Activated T-helper 1 cell treated with anti-CD3 and anti-CD28 coated beads, Interleukin-12 subunit alpha, Interleukin-12 subunit beta, Interleukin-2, Interleukin-4 antibody, amounts not matched to agents 30 ng/mL and 10 ng/mL and 1 ng/mL, durations not matched to agents 14 hours and 24 hours and 36 hours (primary cell): ENCODE measurements at regions of chr16 and their contacts with region 1.

Region 1: GRCh38 chr16:10509534-10510025 is 70.8 kb downstream of the EMP2 start:
- DNase-seq: peak; percentile 49
- H3K4me3 Mint-ChIP-seq: no peak overlapping the region
- H3K27ac Mint-ChIP-seq: peak overlapping the region; percentile 64
- H3K4me1 Mint-ChIP-seq: peaks cover 11% of the 10 kb centered on the region
- H3K27me3 Mint-ChIP-seq: peaks cover 14% of the 10 kb centered on the region

Region 2: DNA sequence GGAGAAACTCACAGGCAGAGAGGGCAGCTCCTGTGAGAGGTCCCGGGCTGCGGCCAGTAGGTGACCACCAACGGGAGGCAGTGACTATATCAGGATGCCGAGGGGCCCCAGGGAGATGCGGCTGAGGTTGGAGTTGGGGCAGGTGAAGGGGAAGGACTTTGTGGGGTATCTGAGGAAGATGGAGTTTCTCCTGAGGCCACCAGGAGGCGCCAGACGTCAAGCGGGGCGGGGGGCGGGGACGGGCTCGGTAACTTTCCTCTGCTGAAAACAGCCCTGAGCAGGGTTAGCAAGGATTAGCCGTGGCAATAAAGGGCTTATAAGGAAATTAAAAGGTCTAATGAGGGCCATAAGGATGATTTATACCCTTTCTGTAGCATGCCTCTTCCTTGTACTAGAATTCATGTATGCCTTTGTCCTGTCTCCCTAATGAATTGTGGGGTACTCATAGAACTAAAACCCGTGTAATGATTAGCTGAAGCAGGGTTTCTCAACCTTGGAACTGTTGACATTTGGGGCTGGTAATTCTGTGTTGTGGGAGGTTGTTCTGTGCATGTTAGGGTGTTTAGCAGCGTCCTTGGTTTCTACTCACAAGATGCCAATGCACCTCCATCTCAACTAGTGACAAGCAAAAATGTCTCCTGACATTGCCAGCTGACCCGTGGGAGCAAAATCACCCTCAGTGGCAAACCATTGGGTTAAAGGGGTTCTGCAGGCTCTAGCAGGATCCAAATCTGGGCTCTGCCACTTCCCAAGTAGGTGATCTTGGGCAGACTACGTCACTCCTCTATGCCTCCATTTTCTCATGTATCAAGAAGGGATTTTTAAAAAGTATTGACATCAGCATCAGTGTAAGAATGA is 252.6 kb before region 1 on chr16:
- intact Hi-C with region 1: loop called (anchors 1 kb)
- DNase-seq: peak; percentile 6
- H3K4me3 Mint-ChIP-seq: no peak overlapping the region
- H3K27ac Mint-ChIP-seq: no peak overlapping the region
- H3K4me1 Mint-ChIP-seq: no peaks in the 10 kb centered on the region
- H3K27me3 Mint-ChIP-seq: no peaks in the 10 kb centered on the region

Region 3: GRCh38 chr16:10385725-10386516 is 123.7 kb before region 1 on chr16 and contains the start of gene ATF7IP2:
- intact Hi-C with region 1: loop called (anchors 2 kb)
- DNase-seq: peak; percentile 87
- H3K4me3 Mint-ChIP-seq: peak within 1 kb of the TSS; percentile 97
- H3K27ac Mint-ChIP-seq: peak within 1 kb of the TSS; percentile 97
- H3K4me1 Mint-ChIP-seq: peaks cover 58% of the 10 kb centered on the region
- H3K27me3 Mint-ChIP-seq: no peaks in the 10 kb centered on the region
- total RNA-seq, gene ATF7IP2: 25.9 and 28.7 TPM in 2 replicates